ENCODE measurements at regions of chr11 and their contacts with region 1.

Region 1: GRCh38 chr11:128879817-128880216 is 11.3 kb upstream of the KCNJ5 start:
- DNase-seq: no peak
- H3K4me3 ChIP-seq: no peak overlapping the region
- CTCF ChIP-seq: no peak

Region 2: GRCh38 chr11:128841461-128842072 is 38.2 kb before region 1 on chr11:
- in situ Hi-C with region 1: no loop called
- DNase-seq: no peak
- H3K4me3 ChIP-seq: no peak overlapping the region
- CTCF ChIP-seq: no peak

Region 3: GRCh38 chr11:128948589-128948988 is 68.8 kb after region 1 on chr11:
- in situ Hi-C with region 1: loop called (anchors 5 kb)
- DNase-seq: no peak
- H3K4me3 ChIP-seq: no peak overlapping the region
- CTCF ChIP-seq: peak; percentile 16